Activated T-helper 1 cell treated with anti-CD3 and anti-CD28 coated beads, Interleukin-12 subunit alpha, Interleukin-12 subunit beta, Interleukin-2, Interleukin-4 antibody, amounts not matched to agents 30 ng/mL and 10 ng/mL and 1 ng/mL, durations not matched to agents 14 hours and 24 hours and 36 hours (primary cell): ENCODE measurements at regions of chr3 and their contacts with region 1.

Region 1: DNA sequence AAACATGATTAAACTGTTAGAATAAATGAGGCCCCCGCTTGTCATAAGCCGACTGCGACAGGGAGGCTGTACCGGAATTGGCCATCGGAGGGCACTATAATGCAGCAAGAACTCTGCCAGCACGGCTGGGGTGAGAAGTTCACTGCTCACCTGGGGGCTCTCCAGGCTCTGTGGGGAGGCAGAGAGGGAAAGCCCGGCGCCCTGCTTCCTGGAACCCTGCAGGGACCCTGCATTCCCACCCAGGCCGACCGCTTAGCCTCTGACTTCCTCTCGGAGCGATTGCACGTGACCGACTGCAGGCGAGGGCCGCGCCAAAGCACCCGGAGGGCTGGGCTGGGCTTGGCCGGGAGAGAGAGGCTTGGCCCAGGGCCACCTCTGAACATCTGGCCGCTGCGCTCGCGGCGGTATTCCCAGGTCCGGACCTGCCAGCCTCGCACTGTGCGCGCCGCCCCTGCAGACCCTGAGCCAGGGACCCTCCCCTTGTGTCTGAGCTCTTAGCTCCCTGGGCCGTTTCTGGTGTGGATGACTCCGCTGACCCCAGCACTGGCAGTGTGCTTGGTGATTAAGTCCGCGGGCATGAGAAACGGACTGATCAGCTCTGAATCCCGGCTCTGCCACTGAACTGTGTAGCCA is 26.2 kb downstream of the DRD3 start:
- DNase-seq: peak; percentile 52
- H3K4me3 Mint-ChIP-seq: peak overlapping the region; percentile 21
- H3K27ac Mint-ChIP-seq: no peak overlapping the region
- H3K4me1 Mint-ChIP-seq: no peaks in the 10 kb centered on the region
- H3K27me3 Mint-ChIP-seq: peaks cover 8% of the 10 kb centered on the region

Region 2: DNA sequence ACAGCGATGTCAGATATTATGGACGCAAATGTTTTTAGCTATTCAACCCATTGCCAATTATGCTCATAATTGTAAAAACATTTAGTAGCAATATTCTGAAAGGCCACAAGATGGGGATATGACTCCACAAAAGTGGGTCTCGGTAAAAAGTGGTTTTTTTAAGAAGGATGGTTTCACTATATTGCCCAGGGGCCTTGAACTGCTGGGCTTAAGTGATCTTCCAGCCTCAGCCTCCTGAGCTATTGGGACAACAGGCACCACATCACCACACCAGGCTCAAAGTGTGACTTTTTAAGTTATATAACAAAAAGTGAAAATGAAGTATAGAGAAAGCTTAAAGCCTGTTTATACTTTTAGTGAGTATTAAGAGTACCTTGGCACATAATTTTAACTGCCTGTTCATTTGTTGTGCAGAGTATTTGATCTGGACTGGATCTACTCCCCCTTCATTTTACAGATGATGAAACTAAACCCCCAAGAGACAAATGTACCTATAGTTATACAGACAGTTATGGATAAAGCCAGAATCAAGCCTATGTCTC is 416.0 kb before region 1 on chr3:
- intact Hi-C with region 1: loop called (anchors 1 kb)
- DNase-seq: peak; percentile 12
- H3K4me3 Mint-ChIP-seq: no peak overlapping the region
- H3K27ac Mint-ChIP-seq: no peak overlapping the region
- H3K4me1 Mint-ChIP-seq: peaks cover 19% of the 10 kb centered on the region
- H3K27me3 Mint-ChIP-seq: no peaks in the 10 kb centered on the region

Region 3: DNA sequence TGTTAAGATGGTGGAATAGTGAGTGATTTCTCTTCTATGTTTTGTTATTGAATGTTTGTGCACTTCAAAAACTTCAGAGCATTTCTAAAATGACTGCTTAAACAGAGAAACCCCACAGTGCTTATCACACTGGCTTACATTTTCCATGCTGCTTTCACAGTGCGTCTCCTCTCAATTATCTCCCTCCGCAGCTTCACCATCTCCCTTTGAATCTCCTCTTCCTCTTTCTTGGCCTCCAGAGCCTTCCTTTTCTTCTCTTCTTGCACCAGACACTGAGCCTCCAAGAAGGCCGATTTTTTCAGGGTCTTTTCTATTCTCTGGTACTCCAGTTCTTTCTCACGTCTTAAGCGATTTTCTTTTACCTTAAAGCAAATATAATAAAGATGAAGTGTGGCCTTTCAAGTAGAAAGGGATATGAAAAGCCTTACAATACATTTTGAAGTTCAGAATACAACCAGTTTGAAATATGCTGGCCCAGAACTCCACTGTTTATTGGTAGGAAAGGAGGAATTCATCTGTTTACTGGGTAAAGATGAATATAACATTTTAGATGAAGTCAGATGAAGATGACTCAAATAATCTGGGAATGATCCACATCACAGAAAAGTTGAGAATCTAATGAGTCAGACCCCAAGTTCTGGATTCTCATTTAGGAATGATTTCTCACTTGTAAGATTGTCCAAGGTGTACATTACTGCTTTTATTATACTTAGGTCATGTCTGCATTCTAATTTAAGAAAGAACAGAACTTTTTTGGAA is 117.7 kb before region 1 on chr3:
- intact Hi-C with region 1: no loop called
- DNase-seq: no peak
- H3K4me3 Mint-ChIP-seq: no peak overlapping the region
- H3K27ac Mint-ChIP-seq: no peak overlapping the region
- H3K4me1 Mint-ChIP-seq: no peaks in the 10 kb centered on the region
- H3K27me3 Mint-ChIP-seq: no peaks in the 10 kb centered on the region

Region 4: GRCh38 chr3:114213627-114214541 is 61.2 kb after region 1 on chr3:
- intact Hi-C with region 1: loop called (anchors 1 kb)
- DNase-seq: peak; percentile 57
- H3K4me3 Mint-ChIP-seq: no peak overlapping the region
- H3K27ac Mint-ChIP-seq: no peak overlapping the region
- H3K4me1 Mint-ChIP-seq: no peaks in the 10 kb centered on the region
- H3K27me3 Mint-ChIP-seq: no peaks in the 10 kb centered on the region

Region 5: DNA sequence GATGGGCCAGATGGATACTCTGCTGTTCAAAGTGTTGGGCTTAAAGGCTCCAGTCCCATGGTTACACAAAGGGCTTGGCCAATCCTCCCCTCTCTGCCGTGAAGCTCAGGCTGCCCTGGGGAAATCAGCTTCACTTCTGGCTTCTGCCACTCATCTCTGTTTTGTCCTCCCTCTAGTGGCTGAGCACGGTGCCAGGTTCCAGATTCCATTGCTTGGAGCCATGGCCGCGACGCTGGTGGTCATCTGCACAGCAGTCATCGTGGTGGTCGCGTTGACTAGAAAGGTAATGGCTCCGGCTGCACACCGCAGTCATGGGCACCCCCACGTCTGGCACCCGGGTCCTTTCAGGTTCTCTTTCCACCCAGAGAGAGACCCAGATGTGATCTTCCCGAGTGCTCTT is 146.8 kb after region 1 on chr3:
- intact Hi-C with region 1: loop called (anchors 2 kb)
- DNase-seq: no peak
- H3K4me3 Mint-ChIP-seq: no peak overlapping the region
- H3K27ac Mint-ChIP-seq: no peak overlapping the region
- H3K4me1 Mint-ChIP-seq: peaks cover 7% of the 10 kb centered on the region
- H3K27me3 Mint-ChIP-seq: no peaks in the 10 kb centered on the region

Region 6: GRCh38 chr3:114383875-114384557 is 231.4 kb after region 1 on chr3:
- intact Hi-C with region 1: loop called (anchors 1 kb)
- DNase-seq: peak; percentile 34
- H3K4me3 Mint-ChIP-seq: peak overlapping the region; percentile 63
- H3K27ac Mint-ChIP-seq: peak overlapping the region; percentile 56
- H3K4me1 Mint-ChIP-seq: peaks cover 9% of the 10 kb centered on the region
- H3K27me3 Mint-ChIP-seq: peaks cover 3% of the 10 kb centered on the region